HCT116 (cell line): ENCODE measurements at regions of chr9 and their contacts with region 1.

Region 1: GRCh38 chr9:129460323-129461261 is 160.3 kb downstream of the C9orf50 start:
- DNase-seq: peak; percentile 90
- ATAC-seq: peak; percentile 83
- H3K4me3 ChIP-seq: peak overlapping the region; percentile 51 to 57
- H3K27ac ChIP-seq: peak overlapping the region; percentile 99
- H3K4me1 ChIP-seq: peaks cover 69 to 80% of the 10 kb centered on the region in 2 experiments
- H3K27me3 ChIP-seq: no peaks in the 10 kb centered on the region
- CTCF ChIP-seq: no peak
- POLR2A ChIP-seq: no peak
- RAD21 ChIP-seq: no peak

Region 2: DNA sequence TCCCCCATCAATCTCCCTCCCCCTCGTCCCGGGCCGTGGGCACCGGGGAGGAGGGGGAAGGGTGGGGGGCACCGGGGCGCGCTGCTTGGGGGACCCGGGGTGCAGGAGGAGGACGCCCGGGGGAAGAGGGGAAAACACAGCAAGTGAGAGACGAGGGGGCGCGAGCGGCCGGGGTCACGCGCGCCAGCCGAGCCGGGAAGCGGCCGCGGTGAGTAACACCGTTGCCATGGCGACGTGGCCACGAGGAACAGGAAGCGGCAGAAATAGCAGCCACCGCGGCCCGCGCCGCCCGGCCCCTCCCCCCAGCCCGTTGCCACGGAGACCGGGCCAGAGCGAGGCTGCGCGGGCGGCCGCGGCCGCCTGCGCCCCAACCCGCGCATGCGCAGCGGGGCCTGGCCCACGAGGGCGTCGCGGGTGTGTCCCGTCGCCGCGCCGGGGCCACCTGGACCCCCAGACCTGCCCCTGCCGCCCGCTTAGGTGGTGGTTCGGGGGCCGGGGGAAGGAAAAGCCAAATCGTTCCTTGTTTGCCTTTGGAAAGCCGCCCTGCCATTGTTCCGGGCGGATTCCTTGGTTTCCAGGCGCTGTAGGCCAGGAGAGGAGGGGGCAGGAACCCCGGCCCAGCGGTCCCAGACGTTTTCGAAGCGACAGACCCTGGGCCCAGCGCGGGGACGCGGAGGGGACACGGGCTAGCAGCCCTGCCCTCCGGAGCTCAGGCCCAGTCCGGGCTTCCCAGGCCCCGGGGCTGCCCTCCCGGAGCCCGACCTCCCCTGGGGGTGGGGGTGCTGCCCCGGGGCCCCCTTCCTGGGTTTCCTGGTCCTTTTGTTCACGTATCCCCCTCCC is 46.8 kb before region 1 on chr9:
- CTCF ChIA-PET with region 1: no interaction called
- POLR2A ChIA-PET with region 1: interaction called, 3 read pairs
- RAD21 ChIA-PET with region 1: no interaction called
- intact Hi-C with region 1: loop called (anchors 5 kb)
- DNase-seq: peak; percentile 81
- ATAC-seq: peak; percentile 85
- H3K4me3 ChIP-seq: peak overlapping the region; percentile 56 to 63
- H3K27ac ChIP-seq: peak overlapping the region; percentile 91
- H3K4me1 ChIP-seq: peaks cover 40 to 69% of the 10 kb centered on the region in 2 experiments
- H3K27me3 ChIP-seq: no peaks in the 10 kb centered on the region
- CTCF ChIP-seq: no peak
- POLR2A ChIP-seq: peak; percentile 17
- RAD21 ChIP-seq: no peak

Region 3: DNA sequence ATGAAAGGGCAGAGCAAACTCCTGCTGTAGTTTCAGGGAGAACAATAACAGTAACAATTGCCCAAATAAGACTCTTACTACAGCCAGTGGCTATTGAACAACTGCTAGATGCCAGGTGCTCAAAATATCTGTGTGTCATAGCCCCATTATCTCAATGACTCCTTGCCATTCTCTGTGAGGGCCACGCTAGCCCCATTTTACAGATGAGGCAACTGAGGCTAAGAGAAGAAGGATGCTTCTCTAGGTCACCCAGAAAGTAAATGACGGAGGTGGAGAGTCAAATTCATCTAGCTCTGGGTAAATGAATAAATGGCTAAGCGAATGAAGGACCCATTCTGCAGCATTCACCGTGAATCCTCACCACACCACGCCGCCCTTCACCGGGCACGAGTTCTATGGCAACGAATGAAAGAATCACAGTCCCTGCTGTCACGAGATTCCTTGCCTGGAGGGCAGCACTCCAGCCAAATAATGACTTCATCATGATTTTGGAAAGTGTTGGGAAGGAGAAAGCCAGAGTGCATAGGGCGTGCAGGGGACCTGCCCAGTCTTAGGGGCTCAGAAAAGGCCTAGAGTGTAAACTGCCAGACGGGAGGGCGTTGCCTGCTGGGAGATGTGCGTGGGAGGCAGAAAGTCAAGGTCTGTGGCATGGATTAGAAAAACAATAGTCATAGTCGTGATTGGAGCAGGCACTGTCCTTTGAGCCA is 13.1 kb after region 1 on chr9:
- CTCF ChIA-PET with region 1: no interaction called
- POLR2A ChIA-PET with region 1: interaction called, 10 read pairs
- RAD21 ChIA-PET with region 1: no interaction called
- intact Hi-C with region 1: no loop called
- DNase-seq: no peak
- ATAC-seq: no peak
- H3K4me3 ChIP-seq: no peak overlapping the region
- H3K27ac ChIP-seq: peak overlapping the region; percentile 100
- H3K4me1 ChIP-seq: peaks cover 83 to 94% of the 10 kb centered on the region in 2 experiments
- H3K27me3 ChIP-seq: no peaks in the 10 kb centered on the region
- CTCF ChIP-seq: no peak
- POLR2A ChIP-seq: no peak
- RAD21 ChIP-seq: no peak

Region 4: GRCh38 chr9:129482521-129483414 is 22.2 kb after region 1 on chr9:
- CTCF ChIA-PET with region 1: no interaction called
- POLR2A ChIA-PET with region 1: interaction called, 10 read pairs
- RAD21 ChIA-PET with region 1: no interaction called
- intact Hi-C with region 1: no loop called
- DNase-seq: no peak
- ATAC-seq: peak; percentile 69
- H3K4me3 ChIP-seq: peak overlapping the region; percentile 44 to 56
- H3K27ac ChIP-seq: peak overlapping the region; percentile 100
- H3K4me1 ChIP-seq: peaks cover 92 to 99% of the 10 kb centered on the region in 2 experiments
- H3K27me3 ChIP-seq: no peaks in the 10 kb centered on the region
- CTCF ChIP-seq: no peak
- POLR2A ChIP-seq: no peak
- RAD21 ChIP-seq: no peak